ENCODE measurements at regions of chr6 and their contacts with region 1.

Region 1: DNA sequence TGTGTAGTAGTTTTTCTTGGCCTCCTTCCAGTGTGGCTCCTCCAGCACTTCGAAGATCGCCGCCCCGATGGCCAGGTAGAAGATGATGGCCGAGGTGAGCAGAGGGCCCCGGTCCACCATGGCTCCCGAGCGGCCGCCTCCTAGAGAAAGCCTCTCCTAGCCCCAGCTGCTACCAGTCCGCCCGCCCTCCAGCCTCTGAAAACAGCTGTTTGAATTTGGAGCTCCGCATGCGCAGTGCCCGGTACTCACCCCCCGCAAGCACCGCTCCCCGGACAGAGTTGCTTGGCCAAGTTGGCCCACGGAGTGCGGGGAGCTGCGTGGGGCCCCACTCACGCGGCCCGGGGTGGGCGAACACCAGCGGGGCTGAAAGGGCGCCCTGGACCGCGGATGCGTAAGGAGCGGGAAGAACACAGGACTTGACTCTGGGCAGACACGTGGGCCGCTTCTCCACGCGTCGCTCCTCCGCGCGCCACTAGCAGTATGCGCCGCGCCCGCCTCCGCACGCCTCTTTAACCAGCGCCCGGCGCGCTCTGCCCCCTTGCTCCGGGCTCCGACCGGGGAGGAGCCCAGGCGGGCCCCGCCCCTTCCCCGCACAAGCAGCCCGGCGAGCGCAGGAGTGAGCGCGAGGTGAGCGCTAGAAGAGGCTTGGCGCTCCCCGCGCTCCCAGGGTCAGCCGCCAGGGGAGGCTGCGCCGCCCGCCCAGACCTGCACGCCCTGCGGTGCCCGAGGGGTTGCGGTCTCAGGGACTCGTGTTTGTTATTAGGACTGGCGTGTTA is at the start of gene KCNK5:
- DNase-seq: peak; percentile 96
- H3K4me3 Mint-ChIP-seq: peak within 1 kb of the TSS; percentile 69
- H3K27ac Mint-ChIP-seq: peak within 1 kb of the TSS; percentile 61
- H3K4me1 Mint-ChIP-seq: peaks cover 43% of the 10 kb centered on the region
- H3K27me3 Mint-ChIP-seq: no peaks in the 10 kb centered on the region
- CTCF ChIP-seq: peak; percentile 88
- total RNA-seq, gene KCNK5: 62.4 and 77.5 TPM in 2 replicates

Region 2: GRCh38 chr6:39029156-39030011 is 199.8 kb before region 1 on chr6:
- CTCF ChIA-PET with region 1: no interaction called
- intact Hi-C with region 1: no loop called
- DNase-seq: peak; percentile 81
- H3K4me3 Mint-ChIP-seq: no peak overlapping the region
- H3K27ac Mint-ChIP-seq: no peak overlapping the region
- H3K4me1 Mint-ChIP-seq: no peaks in the 10 kb centered on the region
- H3K27me3 Mint-ChIP-seq: peaks cover 90% of the 10 kb centered on the region
- CTCF ChIP-seq: peak; percentile 82

Region 3: GRCh38 chr6:39280247-39280731 is 51.1 kb after region 1 on chr6:
- CTCF ChIA-PET with region 1: no interaction called
- intact Hi-C with region 1: loop called (anchors 1 kb)
- DNase-seq: peak; percentile 86
- H3K4me3 Mint-ChIP-seq: peak overlapping the region; percentile 38
- H3K27ac Mint-ChIP-seq: peak overlapping the region; percentile 91
- H3K4me1 Mint-ChIP-seq: peaks cover 36% of the 10 kb centered on the region
- H3K27me3 Mint-ChIP-seq: no peaks in the 10 kb centered on the region
- CTCF ChIP-seq: no peak

Region 4: GRCh38 chr6:39347906-39348585 is 118.9 kb after region 1 on chr6:
- CTCF ChIA-PET with region 1: no interaction called
- intact Hi-C with region 1: no loop called
- DNase-seq: peak; percentile 83
- H3K4me3 Mint-ChIP-seq: no peak overlapping the region
- H3K27ac Mint-ChIP-seq: no peak overlapping the region
- H3K4me1 Mint-ChIP-seq: no peaks in the 10 kb centered on the region
- H3K27me3 Mint-ChIP-seq: peaks cover 85% of the 10 kb centered on the region
- CTCF ChIP-seq: peak; percentile 94

Measured in Calu3 (cell line).